ENCODE measurements at regions of chr16 and their contacts with region 1.

Region 1: DNA sequence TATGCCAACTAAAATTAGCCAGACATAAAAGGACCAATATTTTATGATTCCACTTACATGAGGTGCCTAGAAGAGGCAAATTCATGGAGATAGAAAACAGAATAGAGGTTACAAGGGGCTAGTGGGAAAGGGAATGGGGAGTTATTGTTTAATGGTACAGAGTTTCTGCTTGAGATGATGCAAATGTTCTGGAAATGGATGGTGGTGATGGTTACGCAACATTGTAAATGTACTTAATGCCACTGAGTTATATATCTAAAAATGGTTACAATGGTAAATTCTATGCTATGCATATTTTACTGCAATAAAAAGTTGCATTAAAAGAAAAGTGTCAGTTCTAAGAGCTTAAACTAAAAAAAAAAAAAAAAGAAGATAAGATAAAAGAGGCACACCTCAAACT is 17.9 kb downstream of the MT1X start:
- DNase-seq: no peak
- ATAC-seq: no peak
- H3K4me3 ChIP-seq: no peak overlapping the region
- H3K27ac ChIP-seq: no peak overlapping the region
- H3K4me1 ChIP-seq: peaks cover 0 to 7% (median 1%) of the 10 kb centered on the region in 12 donors
- H3K27me3 ChIP-seq: no peaks in the 10 kb centered on the region
- CTCF ChIP-seq: no peak
- POLR2A ChIP-seq: no peak

Region 2: DNA sequence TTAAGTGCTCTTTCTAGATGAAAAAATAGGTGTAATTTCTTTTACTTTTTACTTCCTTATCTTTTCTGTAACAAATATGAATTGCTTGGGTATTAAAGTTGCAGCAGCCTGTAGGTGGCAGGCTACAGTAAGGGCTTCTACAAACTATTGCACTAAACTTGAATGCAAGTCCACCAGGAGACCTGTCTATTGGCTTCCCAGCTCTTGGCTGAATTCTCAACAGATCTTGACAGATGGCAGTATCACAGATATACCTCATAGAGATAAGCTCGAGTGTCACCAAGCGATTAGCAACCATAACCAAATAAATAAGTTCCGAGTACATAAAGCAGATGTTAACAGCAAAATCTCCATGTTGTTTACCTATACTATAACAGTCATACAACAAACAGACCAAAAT is 186.2 kb before region 1 on chr16:
- intact Hi-C with region 1: loop called in 9 of 10 experiments (anchors 1 to 5 kb)
- DNase-seq: peak in 2 of 5 donors; percentile 30 to 40
- ATAC-seq: peak; percentile 35 to 68 (median 54)
- H3K4me3 ChIP-seq: no peak overlapping the region
- H3K27ac ChIP-seq: no peak overlapping the region
- H3K4me1 ChIP-seq: peaks cover 0 to 44% (median 27%) of the 10 kb centered on the region in 12 donors
- H3K27me3 ChIP-seq: no peaks in the 10 kb centered on the region
- CTCF ChIP-seq: peak; percentile 51 to 80 (median 66)
- POLR2A ChIP-seq: no peak

Region 3: DNA sequence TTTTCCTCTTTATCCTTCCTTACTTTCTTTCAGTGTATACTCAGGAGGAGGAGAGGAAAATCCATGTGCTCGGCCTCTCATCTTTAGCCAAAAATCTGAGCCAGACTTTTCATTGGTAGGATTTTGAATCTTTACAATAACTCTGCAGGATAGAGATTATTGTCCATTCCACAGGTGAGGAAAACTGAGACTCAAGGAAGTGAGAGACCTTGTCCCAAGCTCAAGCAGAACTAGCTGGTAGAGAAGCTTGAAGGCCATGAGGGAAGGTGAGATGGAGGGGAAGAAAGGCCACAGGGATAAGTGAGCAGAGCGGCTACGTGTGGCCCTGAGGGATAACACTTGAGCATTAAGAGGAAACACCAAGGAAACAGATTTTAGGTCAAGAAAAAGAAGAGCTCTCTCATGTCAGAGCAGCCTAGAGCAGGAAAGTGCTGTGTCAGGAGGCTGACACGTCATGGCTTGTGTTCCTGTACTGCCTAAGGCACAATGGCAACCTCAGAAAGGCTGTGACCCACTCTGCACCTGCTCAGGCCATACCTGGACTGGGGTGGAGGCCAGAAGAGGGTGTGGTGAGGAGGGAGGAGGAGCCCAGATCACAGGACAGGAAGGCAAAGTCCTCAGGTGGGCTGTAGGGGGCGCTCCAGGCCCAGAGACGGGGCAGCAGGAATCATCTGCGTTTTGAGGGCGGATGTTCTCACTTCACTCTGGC is 123.5 kb before region 1 on chr16:
- intact Hi-C with region 1: loop called in 7 of 10 experiments (anchors 1 to 5 kb)
- DNase-seq: peak; percentile 59 to 84 (median 65)
- ATAC-seq: peak; percentile 47 to 86 (median 74)
- H3K4me3 ChIP-seq: no peak overlapping the region
- H3K27ac ChIP-seq: no peak overlapping the region
- H3K4me1 ChIP-seq: no peaks in the 10 kb centered on the region
- H3K27me3 ChIP-seq: no peaks in the 10 kb centered on the region
- CTCF ChIP-seq: peak; percentile 51 to 82 (median 66)
- POLR2A ChIP-seq: no peak

Region 4: GRCh38 chr16:56600398-56600999 is 99.7 kb before region 1 on chr16:
- intact Hi-C with region 1: loop called (anchors 1 to 5 kb)
- DNase-seq: no peak
- ATAC-seq: peak in 2 of 4 donors; percentile 31 to 46
- H3K4me3 ChIP-seq: no peak overlapping the region
- H3K27ac ChIP-seq: no peak overlapping the region
- H3K4me1 ChIP-seq: peaks cover 0 to 3% (median 0%) of the 10 kb centered on the region in 12 donors
- H3K27me3 ChIP-seq: peaks cover 0 to 4% (median 0%) of the 10 kb centered on the region in 9 donors
- CTCF ChIP-seq: peak; percentile 36 to 61 (median 50)
- POLR2A ChIP-seq: no peak

Region 5: DNA sequence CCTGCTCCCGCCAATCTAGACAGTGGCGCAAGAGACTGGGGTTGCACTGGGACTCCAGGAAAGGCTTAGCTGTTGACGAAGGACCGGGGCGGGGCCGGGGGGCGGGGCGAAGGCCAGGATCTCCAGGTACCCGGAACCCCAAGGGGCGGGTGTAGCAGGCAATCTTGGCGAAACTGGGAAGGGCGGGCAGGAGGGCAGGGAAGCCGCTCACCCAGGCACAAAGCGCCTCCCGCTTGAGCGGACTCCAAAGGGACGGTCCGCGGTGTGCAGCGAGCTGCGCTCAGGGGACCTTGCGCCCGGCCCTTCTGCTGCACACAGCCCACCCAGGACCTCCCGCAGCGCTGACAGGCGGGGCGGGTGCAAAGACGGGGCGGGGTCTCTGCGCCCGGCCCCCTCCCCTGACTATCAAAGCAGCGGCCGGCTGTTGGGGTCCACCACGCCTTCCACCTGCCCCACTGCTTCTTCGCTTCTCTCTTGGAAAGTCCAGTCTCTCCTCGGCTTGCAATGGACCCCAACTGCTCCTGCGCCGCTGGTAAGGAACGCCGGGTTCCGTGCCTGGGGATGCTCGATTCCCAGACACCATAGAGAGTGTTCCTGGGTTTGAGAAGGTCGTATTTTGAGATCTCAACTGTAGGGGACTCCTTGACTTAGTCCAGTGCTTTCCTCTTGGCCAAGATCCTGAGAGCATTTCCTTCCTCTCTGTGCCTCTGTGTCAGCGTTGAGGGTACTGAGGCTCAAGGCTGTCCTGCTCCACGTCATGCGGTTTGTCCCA is 42.5 kb before region 1 on chr16 and contains the start of gene MT1F:
- intact Hi-C with region 1: no loop called
- DNase-seq: peak; percentile 57 to 82 (median 71)
- ATAC-seq: peak; percentile 70 to 90 (median 84)
- H3K4me3 ChIP-seq: peak within 1 kb of the TSS; percentile 37 to 69 (median 56)
- H3K27ac ChIP-seq: peak within 1 kb of the TSS in 4 of 12 donors; percentile 3 to 75 (median 32)
- H3K4me1 ChIP-seq: peaks cover 0 to 22% (median 12%) of the 10 kb centered on the region in 12 donors
- H3K27me3 ChIP-seq: peaks cover 0 to 38% (median 13%) of the 10 kb centered on the region in 9 donors
- CTCF ChIP-seq: no peak
- POLR2A ChIP-seq: no peak
- total RNA-seq, gene MT1F: 1.3 to 8.1 (median 3.3) TPM in 7 of 9 donors, not detected in the others

Region 6: GRCh38 chr16:56667581-56668571 is 32.3 kb before region 1 on chr16 and contains the start of gene MT1G:
- intact Hi-C with region 1: loop called in 1 of 10 experiments (anchors 5 kb)
- DNase-seq: peak; percentile 48 to 84 (median 56)
- ATAC-seq: peak in 3 of 4 donors; percentile 87 to 93 (median 87)
- H3K4me3 ChIP-seq: peak within 1 kb of the TSS in 8 of 12 donors; percentile 3 to 39 (median 26)
- H3K27ac ChIP-seq: no peak within 1 kb of the TSS
- H3K4me1 ChIP-seq: peaks cover 0 to 27% (median 13%) of the 10 kb centered on the region in 12 donors
- H3K27me3 ChIP-seq: peaks cover 15 to 95% (median 51%) of the 10 kb centered on the region in 9 donors
- CTCF ChIP-seq: no peak
- POLR2A ChIP-seq: no peak
- total RNA-seq, gene MT1G: 1.4 to 19.1 (median 6.0) TPM in 3 of 9 donors, not detected in the others

Region 7: GRCh38 chr16:56673921-56674320 is 26.3 kb before region 1 on chr16:
- intact Hi-C with region 1: loop called in 3 of 10 experiments (anchors 1 to 5 kb)
- DNase-seq: no peak
- ATAC-seq: peak in 3 of 4 donors; percentile 42 to 66 (median 55)
- H3K4me3 ChIP-seq: no peak overlapping the region
- H3K27ac ChIP-seq: no peak overlapping the region
- H3K4me1 ChIP-seq: peaks cover 0 to 19% (median 9%) of the 10 kb centered on the region in 12 donors
- H3K27me3 ChIP-seq: peaks cover 0 to 58% (median 23%) of the 10 kb centered on the region in 9 donors
- CTCF ChIP-seq: peak; percentile 37 to 67 (median 55)
- POLR2A ChIP-seq: no peak

Region 8: GRCh38 chr16:56681939-56682702 is 18.1 kb before region 1 on chr16 and contains the start of gene MT1X:
- intact Hi-C with region 1: loop called in 1 of 10 experiments (anchors 2 kb)
- DNase-seq: peak; percentile 90 to 96 (median 96)
- ATAC-seq: peak; percentile 95 to 98 (median 97)
- H3K4me3 ChIP-seq: peak within 1 kb of the TSS; percentile 27 to 69 (median 62)
- H3K27ac ChIP-seq: peak within 1 kb of the TSS; percentile 70 to 88 (median 84)
- H3K4me1 ChIP-seq: peaks cover 0 to 51% (median 23%) of the 10 kb centered on the region in 12 donors
- H3K27me3 ChIP-seq: no peaks in the 10 kb centered on the region
- CTCF ChIP-seq: no peak
- POLR2A ChIP-seq: peak; percentile 69 to 97
- total RNA-seq, gene MT1X: 20.6 to 918 (median 77.7) TPM

Region 9: GRCh38 chr16:57013229-57013628 is 313.0 kb after region 1 on chr16:
- intact Hi-C with region 1: no loop called
- DNase-seq: no peak
- ATAC-seq: no peak
- H3K4me3 ChIP-seq: no peak overlapping the region
- H3K27ac ChIP-seq: peak overlapping the region in 9 of 12 donors; percentile 1 to 90 (median 79)
- H3K4me1 ChIP-seq: peaks cover 0 to 69% (median 6%) of the 10 kb centered on the region in 12 donors
- H3K27me3 ChIP-seq: no peaks in the 10 kb centered on the region
- CTCF ChIP-seq: no peak
- POLR2A ChIP-seq: no peak

Measured in heart left ventricle (tissue), 16 donors.